Activated B cell treated with CpG ODN at 0.5 μM for 24 hours (primary cell): ENCODE measurements at regions of chr4 and their contacts with region 1.

Region 1: DNA sequence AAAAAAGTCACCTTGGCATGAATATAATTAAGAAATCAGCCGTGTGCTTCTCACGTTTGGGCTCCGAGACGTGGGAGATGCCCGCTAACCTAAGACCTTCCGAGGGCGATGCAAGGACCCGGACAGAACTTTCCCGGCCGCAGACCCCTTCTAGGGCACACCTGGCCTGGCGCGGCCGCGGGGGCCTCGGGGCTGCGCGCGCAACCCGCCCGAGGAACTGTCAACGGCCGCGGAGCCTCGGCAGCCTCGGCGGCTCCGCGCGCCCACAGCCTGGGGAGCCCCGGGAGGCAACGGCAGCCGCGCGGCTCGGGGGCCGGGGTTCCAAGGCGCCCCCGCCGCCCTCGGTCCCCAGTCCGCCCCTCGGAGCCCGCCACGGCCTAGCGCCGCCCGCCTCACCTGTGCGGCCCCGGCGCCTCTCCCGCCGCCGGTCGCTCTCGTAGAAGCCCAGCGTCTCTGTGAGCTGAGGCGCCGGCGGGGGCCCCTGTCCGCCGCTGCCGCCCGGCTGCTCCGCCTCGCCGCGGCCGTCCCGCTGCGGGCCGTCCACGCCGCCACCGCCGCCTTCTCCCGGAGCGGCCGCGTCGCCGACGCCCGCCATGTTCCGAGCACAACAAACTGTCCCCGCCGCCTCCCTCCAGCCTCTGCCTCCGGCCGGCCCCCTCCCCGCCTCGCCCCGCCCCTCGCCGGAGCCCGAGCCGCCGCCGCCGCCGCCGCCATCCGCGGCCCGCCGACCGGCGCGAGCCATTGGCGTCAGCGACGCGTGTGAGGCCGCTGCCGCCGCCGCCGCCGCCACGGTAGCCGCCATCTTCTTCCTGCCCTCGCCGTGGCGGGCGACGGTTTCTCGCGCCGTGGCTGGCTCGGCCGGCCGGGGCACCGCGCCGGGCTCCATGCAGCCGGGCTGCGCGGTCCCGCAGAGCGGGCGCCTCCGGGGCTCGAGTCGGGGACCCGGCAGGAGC is at the start of gene TAPT1:
- DNase-seq: peak; percentile 74
- ATAC-seq: peak; percentile 77
- H3K4me3 Mint-ChIP-seq: peak within 1 kb of the TSS; percentile 97
- H3K27ac Mint-ChIP-seq: peak within 1 kb of the TSS; percentile 98
- H3K4me1 Mint-ChIP-seq: peaks cover 69% of the 10 kb centered on the region
- H3K27me3 Mint-ChIP-seq: no peaks in the 10 kb centered on the region
- CTCF ChIP-seq: no peak
- total RNA-seq, gene TAPT1: 30.0 and 35.0 TPM in 2 replicates

Region 2: GRCh38 chr4:15444872-15445547 is 781.1 kb before region 1 on chr4:
- CTCF ChIA-PET with region 1: no interaction called
- POLR2A ChIA-PET with region 1: no interaction called
- intact Hi-C with region 1: no loop called
- DNase-seq: no peak
- ATAC-seq: no peak
- H3K4me3 Mint-ChIP-seq: no peak overlapping the region
- H3K27ac Mint-ChIP-seq: no peak overlapping the region
- H3K4me1 Mint-ChIP-seq: no peaks in the 10 kb centered on the region
- H3K27me3 Mint-ChIP-seq: peaks cover 2% of the 10 kb centered on the region
- CTCF ChIP-seq: no peak

Region 3: GRCh38 chr4:15649914-15650545 is 576.1 kb before region 1 on chr4:
- CTCF ChIA-PET with region 1: no interaction called
- POLR2A ChIA-PET with region 1: no interaction called
- intact Hi-C with region 1: loop called (anchors 5 kb)
- DNase-seq: no peak
- ATAC-seq: peak; percentile 63
- H3K4me3 Mint-ChIP-seq: no peak overlapping the region
- H3K27ac Mint-ChIP-seq: peak overlapping the region; percentile 31
- H3K4me1 Mint-ChIP-seq: peaks cover 53% of the 10 kb centered on the region
- H3K27me3 Mint-ChIP-seq: no peaks in the 10 kb centered on the region
- CTCF ChIP-seq: no peak

Region 4: DNA sequence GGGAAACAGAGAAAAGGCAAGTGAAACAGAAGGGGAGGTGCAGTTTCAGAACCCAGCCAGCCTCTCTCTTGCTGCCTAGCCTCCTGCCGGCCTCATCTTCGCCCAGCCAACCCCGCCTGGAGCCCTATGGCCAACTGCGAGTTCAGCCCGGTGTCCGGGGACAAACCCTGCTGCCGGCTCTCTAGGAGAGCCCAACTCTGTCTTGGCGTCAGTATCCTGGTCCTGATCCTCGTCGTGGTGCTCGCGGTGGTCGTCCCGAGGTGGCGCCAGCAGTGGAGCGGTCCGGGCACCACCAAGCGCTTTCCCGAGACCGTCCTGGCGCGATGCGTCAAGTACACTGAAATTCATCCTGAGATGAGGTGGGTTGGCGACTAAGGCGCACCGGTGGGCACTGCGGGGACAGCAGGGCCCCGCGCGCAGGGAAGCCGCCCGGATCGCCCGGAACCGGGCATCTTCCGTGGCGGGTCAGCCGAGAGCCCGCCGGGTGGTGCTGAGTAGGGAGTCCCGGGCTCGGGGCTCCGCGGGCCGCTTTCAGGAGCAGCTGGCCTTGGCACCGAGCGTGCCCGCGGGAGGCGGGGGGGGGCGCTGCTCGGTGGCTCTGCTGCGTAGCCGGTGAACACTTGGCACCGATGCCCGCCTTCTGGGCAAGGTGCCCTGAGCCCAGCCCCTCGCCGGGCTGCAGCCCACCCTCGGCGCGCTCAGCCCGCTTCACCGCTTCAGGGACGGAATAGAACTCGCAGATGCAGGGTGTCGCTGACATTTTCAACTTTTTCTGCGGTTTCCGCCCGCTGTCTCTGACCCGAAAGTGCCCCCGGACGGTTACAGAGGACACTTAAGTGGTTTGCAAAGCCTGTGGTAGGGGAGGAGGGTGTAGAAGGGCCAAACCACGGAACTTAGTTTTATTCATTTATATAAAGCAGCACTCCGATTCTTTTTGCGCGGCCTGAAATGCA is 447.6 kb before region 1 on chr4 and contains the start of gene CD38:
- CTCF ChIA-PET with region 1: no interaction called
- POLR2A ChIA-PET with region 1: no interaction called
- intact Hi-C with region 1: loop called (anchors 5 kb)
- DNase-seq: peak; percentile 42
- ATAC-seq: peak; percentile 74
- H3K4me3 Mint-ChIP-seq: peak within 1 kb of the TSS; percentile 88
- H3K27ac Mint-ChIP-seq: peak within 1 kb of the TSS; percentile 38
- H3K4me1 Mint-ChIP-seq: peaks cover 62% of the 10 kb centered on the region
- H3K27me3 Mint-ChIP-seq: no peaks in the 10 kb centered on the region
- CTCF ChIP-seq: no peak
- total RNA-seq, gene CD38: 5.0 and 5.8 TPM in 2 replicates

Region 5: GRCh38 chr4:16205298-16206164 is 20.6 kb before region 1 on chr4:
- CTCF ChIA-PET with region 1: interaction called, 6 read pairs
- POLR2A ChIA-PET with region 1: interaction called, 6 read pairs
- intact Hi-C with region 1: loop called (anchors 1 kb)
- DNase-seq: peak; percentile 28
- ATAC-seq: peak; percentile 86
- H3K4me3 Mint-ChIP-seq: no peak overlapping the region
- H3K27ac Mint-ChIP-seq: peak overlapping the region; percentile 7
- H3K4me1 Mint-ChIP-seq: peaks cover 33% of the 10 kb centered on the region
- H3K27me3 Mint-ChIP-seq: no peaks in the 10 kb centered on the region
- CTCF ChIP-seq: no peak

Region 6: DNA sequence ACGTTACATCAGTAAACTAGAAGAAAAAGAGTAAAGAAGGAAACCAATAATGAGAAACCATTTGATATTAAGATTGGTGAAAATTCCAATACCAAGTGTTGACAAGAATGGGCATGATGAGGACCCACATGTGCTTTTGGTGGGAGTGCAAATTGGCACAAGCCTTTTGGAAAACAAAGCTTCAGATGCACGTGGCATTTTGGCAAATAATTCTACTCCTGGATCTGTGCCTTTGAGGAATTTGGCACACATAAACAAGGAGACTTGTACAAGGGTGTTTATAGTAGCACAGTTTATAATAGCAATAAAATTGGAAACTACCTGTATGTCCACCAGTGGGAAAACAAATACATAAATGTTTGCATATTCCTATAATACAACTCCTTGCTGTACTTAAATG is 324.4 kb after region 1 on chr4:
- CTCF ChIA-PET with region 1: no interaction called
- POLR2A ChIA-PET with region 1: no interaction called
- intact Hi-C with region 1: no loop called
- DNase-seq: no peak
- ATAC-seq: no peak
- H3K4me3 Mint-ChIP-seq: no peak overlapping the region
- H3K27ac Mint-ChIP-seq: no peak overlapping the region
- H3K4me1 Mint-ChIP-seq: no peaks in the 10 kb centered on the region
- H3K27me3 Mint-ChIP-seq: no peaks in the 10 kb centered on the region
- CTCF ChIP-seq: no peak

Region 7: GRCh38 chr4:17576932-17577665 is 1351.0 kb after region 1 on chr4 and contains the start of gene LAP3:
- CTCF ChIA-PET with region 1: no interaction called
- POLR2A ChIA-PET with region 1: no interaction called
- intact Hi-C with region 1: loop called (anchors 5 kb)
- DNase-seq: peak; percentile 99
- ATAC-seq: peak; percentile 90
- H3K4me3 Mint-ChIP-seq: peak within 1 kb of the TSS; percentile 89
- H3K27ac Mint-ChIP-seq: peak within 1 kb of the TSS; percentile 92
- H3K4me1 Mint-ChIP-seq: peaks cover 32% of the 10 kb centered on the region
- H3K27me3 Mint-ChIP-seq: no peaks in the 10 kb centered on the region
- CTCF ChIP-seq: no peak
- total RNA-seq, gene LAP3: 45.1 and 50.5 TPM in 2 replicates

Region 8: GRCh38 chr4:18021722-18022571 is 1795.8 kb after region 1 on chr4 and contains the start of gene LCORL:
- CTCF ChIA-PET with region 1: no interaction called
- POLR2A ChIA-PET with region 1: no interaction called
- intact Hi-C with region 1: loop called (anchors 5 kb)
- DNase-seq: peak; percentile 91
- ATAC-seq: peak; percentile 81
- H3K4me3 Mint-ChIP-seq: peak within 1 kb of the TSS; percentile 97
- H3K27ac Mint-ChIP-seq: peak within 1 kb of the TSS; percentile 92
- H3K4me1 Mint-ChIP-seq: peaks cover 19% of the 10 kb centered on the region
- H3K27me3 Mint-ChIP-seq: no peaks in the 10 kb centered on the region
- CTCF ChIP-seq: no peak
- total RNA-seq, gene LCORL: 11.9 and 12.6 TPM in 2 replicates